GM12878 (cell line): ENCODE measurements at regions of chr3 and their contacts with region 1.

Region 1: DNA sequence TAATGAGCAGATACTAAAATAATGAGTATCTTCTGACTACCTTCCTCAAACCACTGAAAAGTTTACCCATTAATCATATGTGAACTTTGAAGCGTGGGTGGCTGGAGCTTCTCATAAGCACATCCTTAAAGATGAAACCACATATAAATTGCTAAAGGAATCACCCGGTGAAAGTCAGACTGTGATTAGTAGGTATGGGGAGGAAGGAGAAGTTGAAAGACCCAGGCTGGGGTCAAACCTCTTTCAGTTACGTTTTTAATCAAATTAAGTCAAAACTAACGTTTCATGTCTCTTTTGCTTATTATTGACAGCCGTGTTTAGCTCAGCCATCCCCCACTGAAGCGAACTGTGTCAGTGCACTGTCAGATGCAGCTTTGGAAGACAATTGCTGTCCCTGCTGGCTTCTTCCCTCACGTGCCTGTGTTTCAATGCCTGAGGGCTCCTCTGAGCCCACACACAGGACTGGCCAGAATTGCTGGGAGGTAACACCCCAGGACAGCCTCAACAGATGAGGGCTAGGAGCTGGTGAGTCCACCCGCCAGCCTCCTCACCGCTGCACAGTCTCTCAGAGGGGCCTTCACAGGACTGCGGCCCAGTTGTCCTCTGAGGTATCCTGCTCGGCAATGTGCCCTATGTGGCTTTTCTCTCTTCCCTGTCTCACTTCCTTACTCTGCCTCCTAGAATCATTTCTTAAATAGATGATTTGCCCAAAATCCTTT is 29.3 kb upstream of the SH3BP5 start:
- DNase-seq: peak; percentile 99
- ATAC-seq: peak; percentile 82
- H3K4me3 ChIP-seq: peak overlapping the region; percentile 40; the same call in 1 of the 2 replicates
- H3K27ac ChIP-seq: peak overlapping the region; percentile 84
- H3K4me1 ChIP-seq: peaks cover 47% of the 10 kb centered on the region
- H3K27me3 ChIP-seq: no peaks in the 10 kb centered on the region
- CTCF ChIP-seq: no peak
- EP300 ChIP-seq: peak in 1 of 2 experiments; percentile 98
- POLR2A ChIP-seq: peak; percentile 63
- RAD21 ChIP-seq: peak; percentile 2

Region 2: GRCh38 chr3:15291589-15292541 is 69.8 kb before region 1 on chr3:
- CTCF ChIA-PET with region 1: no interaction called
- POLR2A ChIA-PET with region 1: no interaction called
- RAD21 ChIA-PET with region 1: interaction called, 10 read pairs
- SMC1A ChIA-PET with region 1: interaction called, 6 read pairs
- in situ Hi-C with region 1: no loop called
- intact Hi-C with region 1: loop called (anchors 1 kb)
- DNase-seq: peak; percentile 89
- ATAC-seq: peak; percentile 95
- H3K4me3 ChIP-seq: peak overlapping the region; percentile 17; the same call in 1 of the 2 replicates
- H3K27ac ChIP-seq: peak overlapping the region; percentile 73
- H3K4me1 ChIP-seq: peaks cover 38% of the 10 kb centered on the region
- H3K27me3 ChIP-seq: no peaks in the 10 kb centered on the region
- CTCF ChIP-seq: no peak
- EP300 ChIP-seq: peak; percentile 61 to 64; a peak in 3 of 4 replicates
- POLR2A ChIP-seq: no peak
- RAD21 ChIP-seq: no peak

Region 3: DNA sequence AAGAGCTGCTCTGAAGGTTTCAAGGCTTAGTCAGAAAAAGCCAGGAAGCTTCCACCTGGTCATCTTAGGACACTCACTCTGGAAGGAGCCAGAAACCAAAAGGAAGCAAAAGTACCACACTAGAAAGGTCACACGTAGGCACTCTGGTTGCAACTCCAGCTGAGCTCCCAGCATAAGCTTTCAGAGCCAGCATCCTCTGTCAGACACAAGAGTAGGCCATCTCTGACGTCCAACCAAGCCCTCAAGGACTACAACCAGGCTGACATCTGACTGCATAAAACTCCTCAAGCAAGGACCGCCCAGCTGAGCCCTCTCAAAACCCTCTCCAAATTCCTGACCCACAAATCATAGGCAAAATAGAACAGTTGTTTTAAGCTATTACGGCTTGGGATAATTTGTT is 42.1 kb before region 1 on chr3:
- CTCF ChIA-PET with region 1: interaction called, 4 read pairs
- POLR2A ChIA-PET with region 1: interaction called, 3 read pairs
- RAD21 ChIA-PET with region 1: no interaction called
- SMC1A ChIA-PET with region 1: interaction called, 16 read pairs
- in situ Hi-C with region 1: no loop called
- intact Hi-C with region 1: loop called (anchors 2 kb)
- DNase-seq: no peak
- ATAC-seq: 0 out of 3 replicates have a peak, but pooled peaks have one; percentile 2
- H3K4me3 ChIP-seq: no peak overlapping the region
- H3K27ac ChIP-seq: no peak overlapping the region
- H3K4me1 ChIP-seq: peaks cover 38% of the 10 kb centered on the region
- H3K27me3 ChIP-seq: no peaks in the 10 kb centered on the region
- CTCF ChIP-seq: no peak
- EP300 ChIP-seq: no peak
- POLR2A ChIP-seq: no peak
- RAD21 ChIP-seq: no peak

Region 4: DNA sequence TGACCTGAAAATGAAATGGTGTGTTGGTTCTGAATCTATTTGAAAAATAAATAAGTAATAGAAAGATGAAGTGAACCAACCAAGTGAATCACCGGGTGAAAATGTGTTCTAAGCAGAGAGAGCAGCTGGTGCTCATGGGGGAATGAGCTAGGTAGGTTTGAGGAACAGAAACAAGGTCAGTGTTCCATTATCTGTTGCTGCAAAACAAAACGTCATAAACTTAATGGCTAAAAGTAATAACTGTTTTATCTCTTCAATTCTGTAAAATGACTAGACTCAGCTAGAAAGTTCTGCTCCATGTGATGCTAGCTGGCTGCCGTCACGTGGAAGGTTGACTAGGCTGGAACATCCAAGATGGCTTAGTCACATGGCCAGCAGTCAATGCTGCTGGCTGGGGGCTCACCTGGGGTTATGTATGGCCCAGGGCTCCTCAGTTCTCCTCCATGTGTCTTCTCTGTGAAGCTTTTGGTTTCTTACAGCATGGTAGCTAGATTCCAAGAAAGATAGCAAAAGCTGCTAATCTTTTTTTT is 16.0 kb before region 1 on chr3:
- CTCF ChIA-PET with region 1: interaction called, 14 read pairs
- POLR2A ChIA-PET with region 1: interaction called, 11 read pairs
- RAD21 ChIA-PET with region 1: interaction called, 35 read pairs
- SMC1A ChIA-PET with region 1: interaction called, 19 read pairs
- in situ Hi-C with region 1: no loop called
- intact Hi-C with region 1: loop called (anchors 1 kb)
- DNase-seq: peak; percentile 86
- ATAC-seq: peak; percentile 94
- H3K4me3 ChIP-seq: no peak overlapping the region
- H3K27ac ChIP-seq: peak overlapping the region; percentile 83
- H3K4me1 ChIP-seq: peaks cover 42% of the 10 kb centered on the region
- H3K27me3 ChIP-seq: no peaks in the 10 kb centered on the region
- CTCF ChIP-seq: no peak
- EP300 ChIP-seq: peak; percentile 85 to 88
- POLR2A ChIP-seq: peak; percentile 59
- RAD21 ChIP-seq: no peak

Region 5: DNA sequence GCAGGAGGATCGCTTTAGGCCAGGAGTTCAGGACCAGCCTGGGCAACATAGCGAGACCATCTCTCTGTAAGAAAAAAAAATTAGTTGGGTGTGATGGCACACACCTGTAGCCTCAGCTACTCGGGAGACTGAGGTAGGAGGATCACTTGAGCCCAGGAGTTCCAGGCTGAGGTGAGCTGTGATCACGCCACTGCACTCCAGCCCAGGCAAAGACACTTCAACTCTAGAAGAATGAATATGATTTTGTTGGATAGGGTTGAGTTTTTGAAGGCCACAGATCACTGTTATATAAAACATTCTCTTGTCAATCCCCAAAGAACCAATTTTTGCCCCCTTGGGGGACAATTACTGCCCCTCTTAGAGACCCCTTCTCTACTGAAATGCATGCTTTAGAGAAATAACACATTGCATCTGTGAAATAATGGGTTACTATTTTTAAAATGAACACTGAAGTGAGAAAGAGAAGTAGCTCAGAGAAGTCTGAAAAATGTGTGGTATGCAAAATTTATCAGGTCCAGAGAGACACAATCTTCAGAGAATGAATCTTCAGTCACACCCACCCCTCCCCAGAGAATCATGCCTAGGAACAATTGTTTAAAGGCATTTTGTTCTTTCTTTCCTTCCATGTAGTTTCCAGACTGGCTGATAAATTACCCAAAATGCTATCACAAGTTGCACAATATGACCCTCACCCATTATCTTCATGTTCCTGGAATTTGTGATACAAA is 23.0 kb after region 1 on chr3:
- CTCF ChIA-PET with region 1: interaction called, 16 read pairs
- POLR2A ChIA-PET with region 1: interaction called, 13 read pairs
- RAD21 ChIA-PET with region 1: interaction called, 35 read pairs
- SMC1A ChIA-PET with region 1: interaction called, 49 read pairs
- in situ Hi-C with region 1: no loop called
- intact Hi-C with region 1: loop called (anchors 1 kb)
- DNase-seq: peak; percentile 84
- ATAC-seq: peak; percentile 87
- H3K4me3 ChIP-seq: peak overlapping the region; percentile 48; the same call in 1 of the 2 replicates
- H3K27ac ChIP-seq: peak overlapping the region; percentile 93
- H3K4me1 ChIP-seq: peaks cover 66% of the 10 kb centered on the region
- H3K27me3 ChIP-seq: no peaks in the 10 kb centered on the region
- CTCF ChIP-seq: no peak
- EP300 ChIP-seq: peak; percentile 86 to 93
- POLR2A ChIP-seq: no peak
- RAD21 ChIP-seq: 0 out of 2 replicates have a peak, but pooled peaks have one; percentile 1

Region 6: GRCh38 chr3:16906682-16907081 is 1545.0 kb after region 1 on chr3:
- CTCF ChIA-PET with region 1: no interaction called
- POLR2A ChIA-PET with region 1: no interaction called
- RAD21 ChIA-PET with region 1: no interaction called
- SMC1A ChIA-PET with region 1: no interaction called
- in situ Hi-C with region 1: loop called (anchors 25 kb)
- intact Hi-C with region 1: no loop called
- DNase-seq: no peak
- ATAC-seq: peak; percentile 62
- H3K4me3 ChIP-seq: no peak overlapping the region
- H3K27ac ChIP-seq: peak overlapping the region; percentile 63
- H3K4me1 ChIP-seq: peaks cover 50% of the 10 kb centered on the region
- H3K27me3 ChIP-seq: no peaks in the 10 kb centered on the region
- CTCF ChIP-seq: no peak
- EP300 ChIP-seq: no peak
- POLR2A ChIP-seq: no peak
- RAD21 ChIP-seq: no peak